Psoas muscle (tissue), 8 donors: ENCODE measurements at regions of chr5 and their contacts with region 1.

Region 1: DNA sequence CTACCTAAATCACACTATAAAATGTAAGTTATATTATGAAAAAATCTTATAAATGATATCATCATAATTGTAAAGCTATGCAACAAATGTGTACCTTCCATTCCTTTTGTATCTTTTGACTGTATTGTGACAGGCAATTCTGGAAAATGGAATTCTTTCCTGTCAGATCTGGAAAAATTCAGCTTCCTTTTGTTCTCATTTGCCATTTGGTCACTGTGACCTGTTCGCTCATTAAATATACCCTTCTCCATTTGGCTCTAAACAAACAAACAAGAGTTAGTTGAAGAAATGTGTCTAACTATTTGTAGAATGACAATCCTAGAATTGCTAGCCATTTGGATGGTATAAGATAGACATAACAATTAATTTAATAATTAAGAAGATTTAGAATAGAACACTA is 62.7 kb downstream of the CDKL3 start:
- DNase-seq: no peak
- ATAC-seq: no peak
- H3K4me3 ChIP-seq: no peak overlapping the region
- H3K27ac ChIP-seq: no peak overlapping the region
- H3K4me1 ChIP-seq: no peaks in the 10 kb centered on the region
- H3K27me3 ChIP-seq: no peaks in the 10 kb centered on the region
- CTCF ChIP-seq: no peak

Region 2: GRCh38 chr5:134041570-134042411 is 262.5 kb before region 1 on chr5:
- intact Hi-C with region 1: no loop called
- DNase-seq: no peak
- ATAC-seq: no peak
- H3K4me3 ChIP-seq: no peak overlapping the region
- H3K27ac ChIP-seq: no peak overlapping the region
- H3K4me1 ChIP-seq: no peaks in the 10 kb centered on the region
- H3K27me3 ChIP-seq: no peaks in the 10 kb centered on the region
- CTCF ChIP-seq: no peak

Region 3: GRCh38 chr5:134345996-134346395 is 41.7 kb after region 1 on chr5:
- intact Hi-C with region 1: loop called in 1 of 2 experiments (anchors 10 kb)
- DNase-seq: no peak
- ATAC-seq: no peak
- H3K4me3 ChIP-seq: no peak overlapping the region
- H3K27ac ChIP-seq: no peak overlapping the region
- H3K4me1 ChIP-seq: no peaks in the 10 kb centered on the region
- H3K27me3 ChIP-seq: no peaks in the 10 kb centered on the region
- CTCF ChIP-seq: no peak

Region 4: GRCh38 chr5:134365604-134366003 is 61.3 kb after region 1 on chr5:
- intact Hi-C with region 1: loop called in 1 of 2 experiments (anchors 5 kb)
- DNase-seq: no peak
- ATAC-seq: no peak
- H3K4me3 ChIP-seq: no peak overlapping the region
- H3K27ac ChIP-seq: no peak overlapping the region
- H3K4me1 ChIP-seq: peaks cover 22% of the 10 kb centered on the region
- H3K27me3 ChIP-seq: no peaks in the 10 kb centered on the region
- CTCF ChIP-seq: no peak

Region 5: GRCh38 chr5:134403951-134404350 is 99.6 kb after region 1 on chr5:
- intact Hi-C with region 1: loop called in 1 of 2 experiments (anchors 5 kb)
- DNase-seq: no peak
- ATAC-seq: no peak
- H3K4me3 ChIP-seq: no peak overlapping the region
- H3K27ac ChIP-seq: no peak overlapping the region
- H3K4me1 ChIP-seq: no peaks in the 10 kb centered on the region
- H3K27me3 ChIP-seq: no peaks in the 10 kb centered on the region
- CTCF ChIP-seq: no peak

Region 6: DNA sequence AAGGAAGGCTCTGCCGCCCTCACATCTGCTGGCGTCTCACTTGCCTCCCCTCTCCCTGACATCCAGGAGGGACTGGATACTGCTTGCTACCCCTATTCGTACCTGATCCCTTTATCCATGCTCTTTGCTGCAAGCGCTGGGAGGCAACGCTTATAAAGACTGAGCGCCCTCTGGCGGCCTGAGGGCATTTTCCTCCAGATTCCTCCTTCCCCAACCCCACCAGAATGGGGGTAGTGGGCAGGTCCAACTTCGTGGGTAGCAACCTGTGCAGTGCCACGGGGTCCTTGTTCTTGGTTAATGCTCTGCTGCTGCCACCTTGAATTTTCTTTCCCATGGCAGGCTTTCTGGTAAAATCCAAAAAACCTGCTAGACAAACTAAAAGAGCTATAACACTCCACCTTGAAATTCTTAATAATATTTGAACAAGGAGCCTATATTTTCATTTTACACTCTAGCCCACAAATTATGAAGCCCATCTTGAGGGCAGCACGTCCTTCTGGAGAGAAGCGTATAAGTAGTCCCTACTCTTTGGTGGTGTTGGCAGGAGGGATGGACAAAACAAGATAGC is 273.6 kb after region 1 on chr5:
- intact Hi-C with region 1: loop called in 1 of 2 experiments (anchors 2 kb)
- DNase-seq: peak; percentile 83 to 90
- ATAC-seq: peak; percentile 62 to 71 (median 66)
- H3K4me3 ChIP-seq: no peak overlapping the region
- H3K27ac ChIP-seq: no peak overlapping the region
- H3K4me1 ChIP-seq: peaks cover 32% of the 10 kb centered on the region
- H3K27me3 ChIP-seq: no peaks in the 10 kb centered on the region
- CTCF ChIP-seq: peak; percentile 83

Region 7: GRCh38 chr5:134586866-134587524 is 282.7 kb after region 1 on chr5:
- intact Hi-C with region 1: loop called in 1 of 2 experiments (anchors 2 kb)
- DNase-seq: peak; percentile 85 to 90
- ATAC-seq: peak; percentile 73 to 83 (median 79)
- H3K4me3 ChIP-seq: no peak overlapping the region
- H3K27ac ChIP-seq: peak overlapping the region; percentile 30
- H3K4me1 ChIP-seq: peaks cover 31% of the 10 kb centered on the region
- H3K27me3 ChIP-seq: no peaks in the 10 kb centered on the region
- CTCF ChIP-seq: peak; percentile 64